B cell (primary cell): ENCODE measurements at regions of chr2 and their contacts with region 1.

Region 1: GRCh38 chr2:241702132-241703031 is 543 bp downstream of the ING5 start:
- DNase-seq: peak; percentile 96
- ATAC-seq: peak; percentile 75
- H3K4me3 ChIP-seq: peak overlapping the region; percentile 15 to 80 (median 74)
- H3K4me3 Mint-ChIP-seq: peak overlapping the region; percentile 83
- H3K27ac ChIP-seq: peak overlapping the region; percentile 65 to 89
- H3K27ac Mint-ChIP-seq: peak overlapping the region; percentile 86
- H3K4me1 ChIP-seq: peaks cover 14 to 21% of the 10 kb centered on the region in 2 donors
- H3K4me1 Mint-ChIP-seq: peaks cover 20% of the 10 kb centered on the region
- H3K27me3 ChIP-seq: no peaks in the 10 kb centered on the region
- H3K27me3 Mint-ChIP-seq: no peaks in the 10 kb centered on the region
- CTCF ChIP-seq: peak; percentile 74

Region 2: DNA sequence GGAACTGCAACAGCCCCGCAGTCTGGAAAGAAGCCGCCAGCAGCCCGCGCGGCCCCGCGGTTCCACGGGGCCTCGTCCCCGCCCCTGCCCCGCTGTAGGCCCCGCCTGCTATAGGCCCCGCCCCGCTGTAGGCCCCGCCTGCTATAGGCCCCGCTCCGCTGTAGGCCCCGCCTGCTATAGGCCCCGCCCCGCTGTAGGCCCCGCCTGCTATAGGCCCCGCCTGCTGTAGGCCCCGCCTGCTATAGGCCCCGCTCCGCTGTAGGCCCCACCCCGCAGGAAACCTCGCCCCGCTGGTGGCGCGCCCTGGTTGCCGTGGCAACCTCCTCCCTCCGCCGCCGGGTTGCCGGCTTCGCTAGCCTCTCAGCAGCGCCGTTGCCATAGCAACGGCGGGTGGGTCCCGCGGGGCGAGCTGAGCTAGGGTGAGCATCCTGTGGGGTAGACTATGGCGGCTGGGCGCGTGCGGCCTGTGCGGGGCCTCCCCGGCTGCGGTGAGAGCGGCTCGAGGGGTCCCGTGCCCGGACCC is 870.1 kb before region 1 on chr2:
- CTCF ChIA-PET with region 1: no interaction called
- POLR2A ChIA-PET with region 1: no interaction called
- intact Hi-C with region 1: loop called (anchors 5 kb)
- DNase-seq: peak; percentile 98
- ATAC-seq: peak; percentile 92
- H3K4me3 ChIP-seq: peak overlapping the region in 3 of 5 experiments; percentile 39 to 56 (median 41)
- H3K4me3 Mint-ChIP-seq: peak overlapping the region; percentile 73
- H3K27ac ChIP-seq: no peak overlapping the region
- H3K27ac Mint-ChIP-seq: no peak overlapping the region
- H3K4me1 ChIP-seq: peaks cover 6 to 12% of the 10 kb centered on the region in 2 donors
- H3K4me1 Mint-ChIP-seq: peaks cover 6% of the 10 kb centered on the region
- H3K27me3 ChIP-seq: peaks cover 0 to 36% (median 20%) of the 10 kb centered on the region in 4 experiments
- H3K27me3 Mint-ChIP-seq: peaks cover 29% of the 10 kb centered on the region
- CTCF ChIP-seq: no peak

Region 3: DNA sequence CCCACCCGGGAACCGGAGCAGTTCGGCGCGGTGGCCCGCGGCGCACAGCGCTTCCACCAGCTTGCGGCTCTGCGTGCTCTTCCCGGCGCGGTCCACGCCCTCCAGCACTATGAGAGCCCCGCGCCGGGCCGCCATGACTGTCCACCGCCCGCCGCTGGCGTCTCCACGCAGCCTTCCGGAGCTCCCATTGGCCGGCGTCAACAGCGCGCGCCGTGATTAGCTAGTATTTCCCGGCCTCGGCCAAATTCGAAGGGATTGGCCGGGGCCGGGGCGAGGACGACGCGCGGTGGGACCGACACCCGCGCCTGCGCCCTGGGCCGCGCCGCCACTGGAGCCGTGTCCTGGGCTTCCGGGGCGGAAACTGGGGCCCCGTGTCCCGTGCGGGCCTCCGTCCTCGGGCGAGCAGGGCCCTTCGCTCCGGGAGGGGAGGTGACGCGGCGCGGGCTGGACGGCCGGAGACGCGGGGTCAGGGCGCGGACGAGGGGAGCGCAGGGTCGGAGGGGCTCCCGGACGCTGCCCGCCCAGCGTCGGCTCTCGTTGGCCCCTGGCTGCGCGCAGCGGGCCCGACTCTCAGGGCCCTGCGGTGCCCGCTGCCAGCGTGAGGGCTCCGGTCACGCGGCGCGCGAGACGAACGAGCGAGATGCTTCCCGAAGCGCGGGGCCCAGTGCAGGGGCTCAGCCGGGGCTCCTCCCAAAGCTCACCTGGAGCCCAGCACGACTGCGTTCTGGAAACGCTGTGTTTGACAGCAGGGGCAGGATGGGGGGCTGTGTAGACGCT is 15.5 kb before region 1 on chr2 and contains the start of gene DTYMK:
- CTCF ChIA-PET with region 1: interaction called, 19 read pairs
- POLR2A ChIA-PET with region 1: interaction called, 21 read pairs
- intact Hi-C with region 1: loop called (anchors 1 kb)
- DNase-seq: peak; percentile 97
- ATAC-seq: peak; percentile 95
- H3K4me3 ChIP-seq: peak within 1 kb of the TSS; percentile 71 to 91 (median 82)
- H3K4me3 Mint-ChIP-seq: peak within 1 kb of the TSS; percentile 84
- H3K27ac ChIP-seq: peak within 1 kb of the TSS; percentile 61 to 91
- H3K27ac Mint-ChIP-seq: peak within 1 kb of the TSS; percentile 68
- H3K4me1 ChIP-seq: peaks cover 8 to 19% of the 10 kb centered on the region in 2 donors
- H3K4me1 Mint-ChIP-seq: peaks cover 26% of the 10 kb centered on the region
- H3K27me3 ChIP-seq: no peaks in the 10 kb centered on the region
- H3K27me3 Mint-ChIP-seq: no peaks in the 10 kb centered on the region
- CTCF ChIP-seq: no peak
- total RNA-seq, gene DTYMK: 20.7 and 26.3 TPM in 2 replicates

Region 4: DNA sequence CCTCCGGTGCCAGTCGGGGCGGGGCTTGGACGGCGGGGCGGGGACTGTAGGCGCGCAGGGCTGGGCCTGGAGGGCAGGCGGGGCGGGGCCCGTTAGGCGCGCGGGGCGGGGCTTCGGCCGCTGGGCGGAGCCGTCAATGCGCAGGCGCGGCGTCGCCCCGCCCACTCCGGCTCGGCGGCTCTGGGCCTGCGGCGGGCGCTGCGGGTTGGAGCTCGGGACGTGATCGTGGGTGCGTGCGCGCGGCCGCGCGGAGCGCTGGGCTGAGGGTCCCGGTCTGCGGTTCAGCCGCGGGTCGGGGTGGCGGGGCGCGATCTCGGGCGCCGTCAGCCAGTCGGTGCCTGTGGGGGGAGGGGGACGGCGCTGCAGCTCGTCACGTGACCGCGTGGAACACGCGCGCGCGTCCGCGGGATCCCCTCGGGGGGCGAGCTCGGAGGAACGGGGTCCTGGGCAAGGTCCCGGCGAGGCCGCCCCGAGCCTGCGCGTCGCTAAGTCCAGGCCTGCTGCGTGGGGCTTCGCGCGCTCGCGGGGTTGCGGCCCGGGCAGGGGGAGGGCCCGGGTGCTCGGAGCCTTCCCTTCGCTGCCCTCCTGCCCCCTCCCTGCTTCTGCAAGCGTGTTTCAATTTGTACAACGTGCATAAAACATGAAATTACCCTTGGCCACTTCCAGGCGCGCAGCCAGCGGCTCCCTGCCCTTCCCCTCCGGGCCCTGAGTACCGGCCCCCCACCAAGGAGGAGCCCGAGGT is 32.3 kb after region 1 on chr2 and contains the start of gene D2HGDH:
- CTCF ChIA-PET with region 1: interaction called, 41 read pairs
- POLR2A ChIA-PET with region 1: interaction called, 30 read pairs
- intact Hi-C with region 1: loop called (anchors 1 kb)
- DNase-seq: peak; percentile 93
- ATAC-seq: peak; percentile 96
- H3K4me3 ChIP-seq: peak within 1 kb of the TSS; percentile 5 to 94 (median 83)
- H3K4me3 Mint-ChIP-seq: peak within 1 kb of the TSS; percentile 92
- H3K27ac ChIP-seq: peak within 1 kb of the TSS; percentile 40 to 84
- H3K27ac Mint-ChIP-seq: peak within 1 kb of the TSS; percentile 81
- H3K4me1 ChIP-seq: peaks cover 4 to 30% of the 10 kb centered on the region in 2 donors
- H3K4me1 Mint-ChIP-seq: peaks cover 38% of the 10 kb centered on the region
- H3K27me3 ChIP-seq: no peaks in the 10 kb centered on the region
- H3K27me3 Mint-ChIP-seq: no peaks in the 10 kb centered on the region
- CTCF ChIP-seq: no peak
- total RNA-seq, gene D2HGDH: 57.1 and 67.7 TPM in 2 replicates